ENCODE measurements at regions of chr11 and their contacts with region 1.

Region 1: GRCh38 chr11:61187505-61188130 is 15.7 kb upstream of the PGA3 start:
- DNase-seq: peak; percentile 61
- H3K4me3 ChIP-seq: no peak overlapping the region
- H3K27ac ChIP-seq: no peak overlapping the region
- H3K27me3 ChIP-seq: peaks cover 2% of the 10 kb centered on the region
- CTCF ChIP-seq: peak; percentile 97

Region 2: GRCh38 chr11:60775420-60775961 is 412.1 kb before region 1 on chr11:
- CTCF ChIA-PET with region 1: interaction called, 10 read pairs
- POLR2A ChIA-PET with region 1: no interaction called
- DNase-seq: peak; percentile 81
- H3K4me3 ChIP-seq: no peak overlapping the region
- H3K27ac ChIP-seq: no peak overlapping the region
- H3K27me3 ChIP-seq: peaks cover 3% of the 10 kb centered on the region
- CTCF ChIP-seq: peak; percentile 91

Region 3: DNA sequence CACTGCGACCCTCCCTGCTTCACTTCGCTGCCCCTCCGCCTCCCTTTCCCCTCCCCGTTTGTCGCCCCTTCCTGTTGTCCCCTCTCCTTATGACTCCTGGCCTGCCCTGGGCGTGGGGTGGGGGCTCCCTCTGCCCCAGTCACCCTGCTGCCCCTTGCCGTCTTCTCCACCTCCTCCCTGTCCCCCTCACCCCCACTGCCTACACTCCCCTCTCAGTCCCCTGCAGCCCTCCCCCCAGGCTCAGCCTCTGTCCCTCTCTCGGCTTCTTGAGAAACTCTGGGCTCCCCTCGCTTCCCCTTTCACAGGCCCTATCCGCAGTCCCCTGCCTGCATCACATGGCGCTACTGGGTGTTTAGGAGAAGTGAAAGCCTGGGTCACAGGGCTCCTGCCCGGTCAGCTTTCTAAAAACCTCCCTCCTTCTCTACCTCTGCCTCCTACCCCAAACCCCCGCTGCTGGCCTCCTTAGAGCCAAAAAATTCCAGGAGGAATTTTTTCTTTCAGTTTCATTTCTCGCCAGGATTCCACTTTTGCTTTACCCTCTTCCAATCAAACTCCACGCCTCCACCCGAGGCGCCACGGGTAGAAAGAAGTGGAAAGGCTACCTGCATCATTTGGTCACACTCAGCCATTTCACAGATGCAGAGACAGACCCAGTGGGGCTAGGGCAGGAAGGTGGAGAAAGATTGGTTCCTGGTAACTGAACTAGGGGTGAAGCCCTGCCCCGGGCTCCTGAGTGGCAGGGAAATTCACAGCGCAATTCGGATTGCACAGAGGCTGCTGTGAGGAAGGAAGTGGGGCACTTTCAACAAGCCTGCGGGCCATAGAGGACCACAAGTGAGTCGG is 235.5 kb before region 1 on chr11 and contains the start of gene SLC15A3:
- CTCF ChIA-PET with region 1: no interaction called
- POLR2A ChIA-PET with region 1: no interaction called
- DNase-seq: no peak
- H3K4me3 ChIP-seq: peak within 1 kb of the TSS; percentile 55
- H3K27ac ChIP-seq: peak within 1 kb of the TSS; percentile 57
- H3K27me3 ChIP-seq: peaks cover 8% of the 10 kb centered on the region
- CTCF ChIP-seq: no peak
- polyA plus RNA-seq, gene SLC15A3: 4.8 and 9.1 TPM in 2 replicates

Region 4: DNA sequence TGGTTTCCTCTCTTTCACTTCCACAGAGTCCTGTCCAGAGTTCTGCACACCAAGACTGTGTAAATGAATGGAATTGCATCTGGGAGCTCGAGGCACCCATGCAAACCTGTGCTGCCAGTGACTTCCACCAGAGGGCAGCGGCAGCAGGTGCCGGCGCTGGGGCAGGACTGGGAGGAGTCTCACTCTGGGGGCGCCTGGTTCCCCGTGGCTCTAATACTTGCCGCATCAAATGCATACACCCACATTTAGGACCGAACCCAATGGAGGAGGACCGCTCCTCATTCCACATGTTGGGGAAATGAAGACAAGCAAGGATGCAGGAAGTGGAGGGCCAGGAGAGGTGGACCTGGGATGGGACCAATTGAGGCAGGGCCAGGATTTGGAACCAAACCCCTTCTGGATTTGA is 217.2 kb before region 1 on chr11:
- CTCF ChIA-PET with region 1: interaction called, 37 read pairs
- POLR2A ChIA-PET with region 1: no interaction called
- DNase-seq: no peak
- H3K4me3 ChIP-seq: no peak overlapping the region
- H3K27ac ChIP-seq: no peak overlapping the region
- H3K27me3 ChIP-seq: peaks cover 29% of the 10 kb centered on the region
- CTCF ChIP-seq: peak; percentile 81

Region 5: GRCh38 chr11:61075891-61076290 is 111.7 kb before region 1 on chr11:
- CTCF ChIA-PET with region 1: no interaction called
- POLR2A ChIA-PET with region 1: no interaction called
- DNase-seq: no peak
- H3K4me3 ChIP-seq: no peak overlapping the region
- H3K27ac ChIP-seq: no peak overlapping the region
- H3K27me3 ChIP-seq: peaks cover 9% of the 10 kb centered on the region
- CTCF ChIP-seq: no peak

Region 6: DNA sequence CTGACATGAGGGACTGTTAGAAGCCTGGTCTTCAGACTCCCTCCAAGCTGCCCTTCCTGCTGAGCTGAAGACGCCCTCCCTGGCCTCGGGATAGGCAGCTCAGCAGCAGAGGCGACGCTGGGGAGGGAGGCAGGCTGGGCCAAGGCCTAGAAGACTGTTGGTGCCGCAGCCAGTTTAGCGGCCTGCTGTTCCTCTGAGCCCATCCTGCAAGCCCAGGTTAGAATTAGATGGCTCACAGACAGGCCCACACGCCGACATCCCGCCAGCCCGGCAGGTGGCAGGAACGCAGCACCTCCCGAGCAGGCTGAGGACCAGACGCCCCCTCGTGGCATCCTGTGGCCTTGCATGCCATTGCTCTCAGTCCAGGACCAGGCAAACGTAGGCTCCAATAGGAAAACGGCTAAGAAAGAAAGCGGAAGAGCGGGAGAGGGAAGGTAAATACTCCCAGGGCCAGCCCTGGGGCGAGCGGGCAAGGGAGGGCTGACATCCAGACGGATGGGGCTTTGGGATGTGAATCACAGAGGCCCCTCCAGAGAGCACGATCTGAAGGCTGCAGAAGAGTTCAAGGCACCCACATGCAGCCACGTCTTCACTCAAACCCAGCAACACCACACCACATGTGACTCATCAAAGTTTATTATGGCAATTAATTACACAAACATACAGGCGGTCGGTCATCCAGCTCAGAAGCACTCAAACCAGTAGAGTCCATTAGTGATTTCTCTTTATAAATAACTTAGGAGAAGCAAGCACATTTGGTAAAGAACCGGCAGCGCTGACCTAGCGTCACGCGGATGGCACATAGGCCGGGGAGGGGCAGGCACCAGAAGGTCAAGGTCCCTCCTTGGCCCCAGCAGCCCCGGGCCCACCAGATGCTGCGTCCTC is 57.7 kb before region 1 on chr11:
- CTCF ChIA-PET with region 1: interaction called, 22 read pairs
- POLR2A ChIA-PET with region 1: no interaction called
- DNase-seq: peak; percentile 79
- H3K4me3 ChIP-seq: peak overlapping the region; percentile 40
- H3K27ac ChIP-seq: peak overlapping the region; percentile 85
- H3K27me3 ChIP-seq: peaks cover 9% of the 10 kb centered on the region
- CTCF ChIP-seq: peak; percentile 100

Region 7: GRCh38 chr11:61173456-61173855 is 14.2 kb before region 1 on chr11:
- CTCF ChIA-PET with region 1: interaction called, 20 read pairs
- POLR2A ChIA-PET with region 1: no interaction called
- DNase-seq: no peak
- H3K4me3 ChIP-seq: no peak overlapping the region
- H3K27ac ChIP-seq: no peak overlapping the region
- H3K27me3 ChIP-seq: peaks cover 53% of the 10 kb centered on the region
- CTCF ChIP-seq: peak; percentile 38